Left cardiac atrium (tissue), 4 donors: ENCODE measurements at regions of chr20 and their contacts with region 1.

Region 1: GRCh38 chr20:10427060-10427692 is 6.8 kb downstream of the MKKS start:
- DNase-seq: peak; percentile 64
- ATAC-seq: peak; percentile 46 to 55

Region 2: DNA sequence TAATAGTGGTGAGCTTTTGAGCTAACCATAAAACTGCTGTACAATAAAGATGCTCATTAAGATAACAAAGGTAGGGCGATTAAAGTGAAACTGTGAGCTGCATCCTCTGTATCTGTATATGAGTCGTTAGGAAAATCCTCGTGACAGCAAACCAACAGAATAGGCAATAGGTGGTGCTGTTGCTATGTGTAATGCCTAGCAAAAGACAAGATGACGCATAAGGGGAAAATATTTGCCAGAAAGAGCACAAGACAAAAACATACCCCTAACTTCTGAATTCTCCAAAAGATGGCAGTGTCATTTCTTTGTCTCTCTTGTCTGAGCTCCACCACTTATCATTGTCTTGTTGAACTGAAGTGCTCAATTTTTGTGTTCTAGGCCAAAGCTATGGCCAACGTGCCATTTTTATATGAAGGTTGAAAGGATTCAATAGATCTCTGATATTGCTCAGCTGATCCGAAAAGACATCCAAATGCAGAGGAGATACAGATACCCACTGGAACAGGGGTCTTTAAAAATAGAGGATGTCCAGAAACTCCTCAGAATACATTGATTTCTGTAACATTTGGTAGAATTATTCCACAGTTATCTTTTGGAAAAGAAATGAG is 448.7 kb before region 1 on chr20:
- intact Hi-C with region 1: loop called (anchors 2 to 10 kb)
- DNase-seq: no peak
- ATAC-seq: peak; percentile 91 to 97

Region 3: DNA sequence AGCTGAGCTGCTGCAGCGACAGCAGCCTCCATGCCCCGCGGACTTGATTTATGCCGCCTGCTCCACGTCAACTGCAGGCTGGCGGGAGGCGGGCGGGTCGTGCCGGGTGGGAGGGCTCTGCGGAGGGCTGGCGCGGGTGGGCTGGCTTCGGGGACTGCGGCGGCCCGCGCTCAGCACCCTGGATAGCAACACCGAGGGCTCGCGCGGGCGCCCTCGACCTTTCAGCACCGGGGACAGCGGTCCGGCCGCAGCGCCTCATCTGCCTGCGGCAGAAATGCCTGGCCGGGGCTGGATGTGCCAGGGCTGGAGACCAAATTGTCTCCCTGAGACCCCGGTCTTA is 207.8 kb before region 1 on chr20:
- intact Hi-C with region 1: loop called in 1 of 2 experiments (anchors 5 kb)
- DNase-seq: peak; percentile 81
- ATAC-seq: peak; percentile 82 to 85

Region 4: DNA sequence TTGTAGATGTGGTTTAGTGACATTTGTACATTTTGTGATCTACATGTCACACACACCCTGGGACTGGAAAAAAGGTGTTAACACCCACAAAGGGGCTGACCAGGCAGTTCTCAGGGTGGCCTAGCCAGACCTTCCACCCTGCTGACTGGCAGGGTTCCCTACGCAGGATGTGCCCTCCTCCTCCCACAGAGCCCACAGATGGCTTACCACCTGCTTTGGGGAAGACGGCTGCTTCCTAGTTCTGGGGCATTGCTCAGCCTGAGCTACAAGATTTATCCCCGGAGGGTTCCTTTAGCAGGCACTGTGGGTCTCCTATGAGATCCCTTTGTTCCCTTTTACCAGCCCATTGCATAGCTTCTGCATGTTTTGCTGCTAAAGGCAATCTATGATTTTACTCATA is 173.4 kb before region 1 on chr20:
- intact Hi-C with region 1: no loop called
- DNase-seq: no peak
- ATAC-seq: no peak

Region 5: GRCh38 chr20:10271494-10272219 is 155.5 kb before region 1 on chr20:
- intact Hi-C with region 1: no loop called
- DNase-seq: no peak
- ATAC-seq: no peak

Region 6: DNA sequence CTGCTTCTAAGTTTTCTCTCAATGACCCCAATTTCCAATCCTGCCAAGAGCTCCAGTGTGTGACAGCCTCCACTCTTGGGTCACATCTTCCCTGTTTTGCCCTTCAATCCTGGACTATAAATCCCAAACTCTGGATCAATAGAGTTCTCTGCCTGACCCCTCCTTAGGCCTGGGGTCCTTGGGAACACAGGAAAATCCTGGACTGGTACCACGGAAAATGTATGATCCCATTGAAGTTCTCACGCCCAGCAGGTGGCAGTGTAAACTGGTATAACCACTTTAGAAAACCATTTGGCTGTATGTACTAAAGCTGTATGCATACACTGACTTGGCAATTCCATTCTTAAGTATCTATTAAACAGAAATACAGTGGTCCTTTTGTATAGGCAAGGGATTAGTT is 110.6 kb before region 1 on chr20:
- intact Hi-C with region 1: loop called in 1 of 2 experiments (anchors 5 kb)
- DNase-seq: no peak
- ATAC-seq: no peak